B cell (primary cell): ENCODE measurements at regions of chr10 and their contacts with region 1.

Region 1: GRCh38 chr10:97498076-97498840 is at the start of gene MMS19:
- DNase-seq: peak; percentile 99
- ATAC-seq: peak; percentile 87
- H3K4me3 ChIP-seq: peak within 1 kb of the TSS; percentile 92 to 98 (median 96)
- H3K4me3 Mint-ChIP-seq: peak within 1 kb of the TSS; percentile 99
- H3K27ac ChIP-seq: peak within 1 kb of the TSS; percentile 77 to 91
- H3K27ac Mint-ChIP-seq: peak within 1 kb of the TSS; percentile 99
- H3K4me1 ChIP-seq: peaks cover 21% of the 10 kb centered on the region in 2 donors
- H3K4me1 Mint-ChIP-seq: peaks cover 38% of the 10 kb centered on the region
- H3K27me3 ChIP-seq: peaks cover 0 to 27% (median 16%) of the 10 kb centered on the region in 4 experiments
- H3K27me3 Mint-ChIP-seq: peaks cover 31% of the 10 kb centered on the region
- CTCF ChIP-seq: no peak
- total RNA-seq, gene MMS19: 78.0 and 82.1 TPM in 2 replicates

Region 2: DNA sequence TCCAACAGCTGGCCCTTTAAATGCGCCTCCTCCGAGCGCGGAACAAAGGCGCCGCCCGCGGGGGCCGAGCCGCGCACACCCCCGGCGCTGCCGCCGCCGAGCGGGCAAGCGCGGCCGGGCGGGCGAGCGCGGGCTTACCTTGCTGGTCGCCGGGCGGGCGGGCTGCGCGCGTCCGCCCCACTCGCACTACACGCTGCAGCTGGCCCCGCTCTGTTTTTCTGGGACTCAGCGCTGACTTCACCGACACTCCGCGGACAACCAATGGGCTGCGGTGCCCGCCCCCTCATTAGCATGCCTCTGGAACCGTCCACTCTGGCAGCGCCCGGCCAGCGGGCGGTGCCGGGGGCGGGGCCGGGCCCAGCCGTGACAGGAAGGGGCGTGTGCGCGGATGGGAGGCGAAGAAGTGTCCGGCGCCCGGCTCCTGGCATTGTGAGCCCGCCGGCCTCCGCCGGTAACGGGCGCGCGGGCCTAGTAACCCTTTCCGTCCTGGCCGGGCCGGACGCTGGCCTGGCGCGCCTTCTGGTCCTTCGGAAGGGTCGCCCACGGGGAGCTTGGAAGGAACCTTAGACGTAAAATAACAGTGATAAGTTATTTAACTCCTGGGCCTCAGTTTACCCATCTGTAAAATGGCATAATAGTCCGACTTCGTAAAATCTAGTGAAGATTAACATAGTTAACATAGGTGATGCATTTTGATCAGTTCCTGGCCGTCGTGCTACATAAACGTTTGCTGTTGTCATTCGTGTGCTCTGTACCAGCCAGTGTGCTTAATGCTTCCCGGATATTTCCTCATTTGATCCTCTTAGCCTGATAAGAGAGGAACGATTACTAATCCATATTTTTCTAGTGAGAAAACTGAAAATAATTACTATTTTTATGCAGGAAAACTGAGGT is 1936.8 kb before region 1 on chr10 and contains the start of gene SORBS1:
- CTCF ChIA-PET with region 1: no interaction called
- POLR2A ChIA-PET with region 1: no interaction called
- intact Hi-C with region 1: loop called (anchors 5 kb)
- DNase-seq: peak; percentile 90
- ATAC-seq: peak; percentile 98
- H3K4me3 ChIP-seq: peak within 1 kb of the TSS; percentile 72 to 92 (median 86)
- H3K4me3 Mint-ChIP-seq: peak within 1 kb of the TSS; percentile 100
- H3K27ac ChIP-seq: peak within 1 kb of the TSS in 1 of 2 donors; percentile 44
- H3K27ac Mint-ChIP-seq: peak within 1 kb of the TSS; percentile 81
- H3K4me1 ChIP-seq: peaks cover 8 to 11% of the 10 kb centered on the region in 2 donors
- H3K4me1 Mint-ChIP-seq: peaks cover 16% of the 10 kb centered on the region
- H3K27me3 ChIP-seq: peaks cover 0 to 13% (median 0%) of the 10 kb centered on the region in 4 experiments
- H3K27me3 Mint-ChIP-seq: peaks cover 25% of the 10 kb centered on the region
- CTCF ChIP-seq: no peak
- total RNA-seq, gene SORBS1: 0.44 and 1.5 TPM in 2 replicates

Region 3: GRCh38 chr10:97400665-97401454 is 97.4 kb before region 1 on chr10 and contains the start of gene RRP12:
- CTCF ChIA-PET with region 1: no interaction called
- POLR2A ChIA-PET with region 1: no interaction called
- intact Hi-C with region 1: loop called (anchors 1 kb)
- DNase-seq: peak; percentile 97
- ATAC-seq: peak; percentile 88
- H3K4me3 ChIP-seq: peak within 1 kb of the TSS; percentile 68 to 98 (median 81)
- H3K4me3 Mint-ChIP-seq: peak within 1 kb of the TSS; percentile 98
- H3K27ac ChIP-seq: peak within 1 kb of the TSS; percentile 90 to 94
- H3K27ac Mint-ChIP-seq: peak within 1 kb of the TSS; percentile 97
- H3K4me1 ChIP-seq: peaks cover 12 to 19% of the 10 kb centered on the region in 2 donors
- H3K4me1 Mint-ChIP-seq: peaks cover 15% of the 10 kb centered on the region
- H3K27me3 ChIP-seq: no peaks in the 10 kb centered on the region
- H3K27me3 Mint-ChIP-seq: no peaks in the 10 kb centered on the region
- CTCF ChIP-seq: no peak
- total RNA-seq, gene RRP12: 33.6 and 35.7 TPM in 2 replicates

Region 4: DNA sequence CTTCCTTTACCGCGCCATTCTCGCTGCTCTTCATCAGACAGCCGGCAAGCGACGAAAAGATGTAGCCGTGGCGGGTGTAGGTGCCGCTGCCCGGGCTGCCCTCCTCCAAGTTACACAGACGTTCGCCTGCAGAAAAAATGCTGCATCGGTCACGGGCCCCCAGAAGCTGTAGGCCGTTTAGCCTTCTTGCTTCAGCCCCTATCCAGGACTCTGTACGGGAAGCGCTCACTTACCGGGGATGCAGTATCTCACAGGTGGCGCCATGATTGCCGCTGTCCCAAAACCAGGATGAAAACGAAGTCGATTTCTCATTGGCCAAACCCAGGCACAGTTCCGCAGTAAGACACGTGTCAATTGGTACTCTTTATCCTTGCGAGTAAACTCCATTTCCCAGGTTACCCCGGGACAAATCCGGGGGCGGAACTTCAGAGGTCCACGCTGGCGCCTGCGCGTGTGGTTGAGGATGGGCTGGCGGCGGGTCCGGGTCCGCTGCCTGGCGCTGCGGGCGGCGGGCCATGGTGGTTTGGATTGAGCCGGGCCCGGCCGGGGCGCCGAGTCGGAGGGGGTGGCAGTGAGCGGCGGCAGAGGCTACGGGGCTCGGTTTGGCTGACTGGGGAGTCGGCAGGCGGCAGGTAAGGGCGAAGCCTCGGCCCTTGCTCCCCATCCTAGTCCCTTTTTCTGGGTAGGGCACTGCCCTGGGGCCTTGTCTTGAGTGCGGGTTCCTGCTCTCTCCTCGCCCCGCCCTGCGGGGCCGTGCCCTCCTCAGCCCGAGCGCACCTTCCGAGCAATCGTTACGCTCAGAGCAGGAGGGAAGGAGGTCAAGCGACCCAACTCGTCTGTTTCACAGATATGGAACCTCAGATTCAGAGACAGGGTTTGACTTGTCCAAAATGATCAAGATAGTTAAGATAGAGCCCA is 52.3 kb before region 1 on chr10 and contains the starts of genes EXOSC1 and ZDHHC16:
- CTCF ChIA-PET with region 1: no interaction called
- POLR2A ChIA-PET with region 1: no interaction called
- intact Hi-C with region 1: loop called (anchors 1 kb)
- DNase-seq: peak; percentile 92
- ATAC-seq: peak; percentile 97
- H3K4me3 ChIP-seq: peak within 1 kb of the TSS; percentile 67 to 92 (median 81)
- H3K4me3 Mint-ChIP-seq: peak within 1 kb of the TSS; percentile 99
- H3K27ac ChIP-seq: peak within 1 kb of the TSS; percentile 34 to 69
- H3K27ac Mint-ChIP-seq: peak within 1 kb of the TSS; percentile 97
- H3K4me1 ChIP-seq: peaks cover 18 to 26% of the 10 kb centered on the region in 2 donors
- H3K4me1 Mint-ChIP-seq: peaks cover 41% of the 10 kb centered on the region
- H3K27me3 ChIP-seq: no peaks in the 10 kb centered on the region
- H3K27me3 Mint-ChIP-seq: no peaks in the 10 kb centered on the region
- CTCF ChIP-seq: no peak
- total RNA-seq, gene EXOSC1: 44.5 and 49.0 TPM in 2 replicates
- total RNA-seq, gene ZDHHC16: 35.6 and 41.5 TPM in 2 replicates

Region 5: DNA sequence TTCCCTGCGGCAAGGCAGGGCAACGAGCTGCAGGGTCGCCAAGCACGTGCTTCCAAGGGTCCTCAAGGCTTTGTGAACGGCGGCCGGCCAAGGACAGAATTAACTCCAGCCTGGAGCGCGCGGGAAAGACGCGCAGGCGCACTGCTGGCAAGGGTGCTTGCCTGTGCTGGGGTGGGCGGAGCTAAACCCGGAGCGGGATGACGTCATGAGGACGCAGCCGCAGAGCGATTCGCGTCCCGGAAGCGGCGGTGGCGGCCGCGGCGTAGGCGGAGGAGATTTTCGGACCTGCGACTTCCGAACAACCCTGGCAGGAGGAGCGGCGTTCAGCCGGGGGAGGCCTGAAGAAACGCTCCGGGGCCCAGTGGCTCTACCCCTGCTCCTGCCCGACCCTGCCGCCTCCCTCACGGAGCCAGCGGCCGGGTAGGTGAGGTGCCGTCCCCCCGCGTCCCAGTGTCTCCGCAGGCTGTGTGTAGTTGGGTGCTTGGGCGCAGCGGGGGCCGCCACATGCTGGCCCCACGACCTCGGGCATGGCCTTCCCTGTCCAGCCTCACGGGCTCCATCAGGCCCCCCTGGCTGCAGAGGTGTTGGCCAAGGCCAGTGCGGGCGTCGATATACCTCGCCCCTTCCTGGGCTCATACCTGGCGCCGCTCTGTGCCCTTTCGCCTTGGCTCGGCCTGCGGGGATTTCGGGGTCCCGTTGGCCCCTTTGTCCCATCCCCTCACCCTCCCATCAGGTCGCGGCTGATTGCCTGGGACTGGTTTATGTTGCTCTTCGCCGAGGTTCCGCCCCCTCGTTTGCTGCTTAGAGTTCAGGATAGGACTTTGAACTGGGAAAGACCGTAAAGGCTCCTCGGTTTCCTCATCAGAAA is 238.9 kb after region 1 on chr10 and contains the start of gene ZFYVE27:
- CTCF ChIA-PET with region 1: no interaction called
- POLR2A ChIA-PET with region 1: interaction called, 3 read pairs
- intact Hi-C with region 1: loop called (anchors 1 kb)
- DNase-seq: peak; percentile 98
- ATAC-seq: peak; percentile 92
- H3K4me3 ChIP-seq: peak within 1 kb of the TSS; percentile 46 to 97 (median 77)
- H3K4me3 Mint-ChIP-seq: peak within 1 kb of the TSS; percentile 100
- H3K27ac ChIP-seq: peak within 1 kb of the TSS; percentile 92 to 97
- H3K27ac Mint-ChIP-seq: peak within 1 kb of the TSS; percentile 100
- H3K4me1 ChIP-seq: peaks cover 25 to 39% of the 10 kb centered on the region in 2 donors
- H3K4me1 Mint-ChIP-seq: peaks cover 55% of the 10 kb centered on the region
- H3K27me3 ChIP-seq: no peaks in the 10 kb centered on the region
- H3K27me3 Mint-ChIP-seq: no peaks in the 10 kb centered on the region
- CTCF ChIP-seq: no peak
- total RNA-seq, gene ZFYVE27: 79.0 and 79.7 TPM in 2 replicates